ENCODE measurements at regions of chr5 and their contacts with region 1.

Region 1: DNA sequence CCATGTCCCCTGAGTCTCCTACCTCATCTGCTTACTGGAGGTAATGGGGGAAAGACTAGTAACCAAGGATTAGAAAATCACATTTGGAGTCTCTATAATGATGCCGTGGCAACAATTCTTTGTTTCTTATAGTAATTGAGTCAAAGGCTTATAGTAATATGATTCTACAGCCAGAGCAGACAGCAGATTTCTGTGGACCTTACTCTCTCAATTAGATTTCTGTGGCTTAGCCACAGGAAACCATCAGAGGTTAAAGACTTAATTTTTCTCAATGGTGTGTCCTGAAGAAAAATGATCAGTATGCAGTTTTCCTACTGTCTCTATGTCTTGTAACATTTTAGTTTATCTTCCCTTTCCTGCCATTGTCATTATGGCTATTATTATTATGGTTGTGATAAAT is 59.3 kb upstream of the CD180 start:
- DNase-seq: no peak
- H3K4me3 ChIP-seq: no peak overlapping the region
- H3K27ac ChIP-seq: peak overlapping the region in 1 of 2 donors; percentile 8
- H3K4me1 ChIP-seq: no peaks in the 10 kb centered on the region
- H3K27me3 ChIP-seq: no peaks in the 10 kb centered on the region
- CTCF ChIP-seq: no peak
- POLR2A ChIP-seq: no peak

Region 2: DNA sequence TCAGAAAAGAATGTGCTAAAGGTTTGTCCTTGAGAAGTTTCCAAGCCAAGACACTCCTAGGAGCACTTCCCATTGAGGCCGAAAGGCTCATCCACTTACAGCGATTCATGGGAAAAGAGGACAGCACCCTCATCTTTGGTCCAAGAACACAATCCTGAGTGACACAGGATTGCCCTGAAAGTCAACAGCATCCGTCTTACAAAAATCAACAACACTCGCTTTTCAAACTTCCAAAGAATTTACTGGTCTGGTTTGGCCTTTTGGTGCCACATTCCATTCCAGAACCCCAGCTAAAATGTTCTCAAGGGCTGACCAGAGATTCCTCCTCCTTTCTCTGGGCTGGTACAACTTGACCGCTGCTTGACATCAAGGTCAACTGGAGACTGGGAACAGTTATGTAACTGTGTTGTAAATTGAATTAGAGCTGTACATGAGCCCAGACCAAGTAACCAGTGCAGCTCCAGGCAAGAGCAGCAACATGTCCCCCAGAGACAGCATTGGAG is 543.9 kb after region 1 on chr5:
- intact Hi-C with region 1: loop called (anchors 10 kb)
- DNase-seq: no peak
- H3K4me3 ChIP-seq: no peak overlapping the region
- H3K27ac ChIP-seq: peak overlapping the region; percentile 10 to 29
- H3K4me1 ChIP-seq: no peaks in the 10 kb centered on the region
- H3K27me3 ChIP-seq: no peaks in the 10 kb centered on the region
- CTCF ChIP-seq: peak in 1 of 3 donors; percentile 16
- POLR2A ChIP-seq: no peak

Region 3: GRCh38 chr5:69202497-69202896 is 1946.6 kb after region 1 on chr5:
- intact Hi-C with region 1: no loop called
- DNase-seq: no peak
- H3K4me3 ChIP-seq: no peak overlapping the region
- H3K27ac ChIP-seq: no peak overlapping the region
- H3K4me1 ChIP-seq: no peaks in the 10 kb centered on the region
- H3K27me3 ChIP-seq: no peaks in the 10 kb centered on the region
- CTCF ChIP-seq: no peak
- POLR2A ChIP-seq: no peak

Measured in breast epithelium (tissue), 4 donors.